Testis (tissue), 5 donors: ENCODE measurements at regions of chr2 and their contacts with region 1.

Region 1: GRCh38 chr2:134118279-134119116 is 135.4 kb upstream of the MGAT5 start:
- DNase-seq: peak; percentile 95
- H3K4me3 ChIP-seq: no peak overlapping the region
- H3K27ac ChIP-seq: peak overlapping the region in 1 of 2 donors; percentile 92
- H3K4me1 ChIP-seq: peaks cover 10% of the 10 kb centered on the region
- H3K27me3 ChIP-seq: no peaks in the 10 kb centered on the region
- CTCF ChIP-seq: peak; percentile 62 to 87 (median 84)
- POLR2A ChIP-seq: no peak

Region 2: GRCh38 chr2:133886735-133887660 is 231.5 kb before region 1 on chr2:
- intact Hi-C with region 1: loop called (anchors 10 kb)
- DNase-seq: peak; percentile 91
- H3K4me3 ChIP-seq: no peak overlapping the region
- H3K27ac ChIP-seq: no peak overlapping the region
- H3K4me1 ChIP-seq: no peaks in the 10 kb centered on the region
- H3K27me3 ChIP-seq: no peaks in the 10 kb centered on the region
- CTCF ChIP-seq: peak; percentile 62 to 72 (median 69)
- POLR2A ChIP-seq: no peak

Region 3: DNA sequence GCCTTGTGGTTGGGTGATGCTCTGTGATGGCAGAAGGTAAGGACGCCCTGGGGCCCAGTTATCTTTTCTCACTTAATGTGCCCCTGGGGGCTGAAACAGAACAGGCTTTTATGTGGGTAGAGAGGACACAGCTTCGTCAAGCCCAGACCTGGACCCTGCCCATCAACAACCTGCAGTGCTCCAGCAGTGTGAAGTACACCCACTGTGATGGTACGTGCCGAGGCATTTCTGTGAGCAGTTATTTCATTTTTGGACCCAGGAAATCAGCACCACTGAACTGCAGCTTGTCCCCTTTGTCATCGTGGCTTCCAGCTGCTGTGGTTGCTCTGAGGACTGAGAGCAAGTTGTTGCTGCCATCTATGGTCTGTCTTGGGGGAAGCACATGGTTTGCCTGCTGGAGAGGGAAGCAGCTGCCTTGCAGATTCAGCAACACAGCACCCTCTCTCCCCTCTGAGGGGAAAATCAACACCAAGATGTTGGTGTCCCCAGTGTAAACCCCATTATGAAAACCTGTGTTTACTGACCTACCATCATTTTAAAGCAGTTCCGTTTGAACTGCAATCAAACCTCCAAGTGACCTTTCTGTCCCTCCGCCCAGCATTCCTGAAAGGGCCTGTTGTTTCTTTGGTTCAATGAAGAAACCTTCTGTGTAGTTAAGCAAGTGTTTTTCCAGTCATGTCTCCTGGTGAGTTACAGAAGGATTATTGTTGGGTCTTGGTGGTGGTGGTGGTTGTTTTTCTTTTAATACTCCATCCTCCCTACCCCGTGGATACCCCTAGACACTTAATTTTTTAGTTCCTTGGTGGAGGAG is 293.5 kb after region 1 on chr2:
- intact Hi-C with region 1: loop called (anchors 5 kb)
- DNase-seq: peak; percentile 76
- H3K4me3 ChIP-seq: no peak overlapping the region
- H3K27ac ChIP-seq: no peak overlapping the region
- H3K4me1 ChIP-seq: no peaks in the 10 kb centered on the region
- H3K27me3 ChIP-seq: no peaks in the 10 kb centered on the region
- CTCF ChIP-seq: peak; percentile 20 to 68 (median 54)
- POLR2A ChIP-seq: no peak

Region 4: DNA sequence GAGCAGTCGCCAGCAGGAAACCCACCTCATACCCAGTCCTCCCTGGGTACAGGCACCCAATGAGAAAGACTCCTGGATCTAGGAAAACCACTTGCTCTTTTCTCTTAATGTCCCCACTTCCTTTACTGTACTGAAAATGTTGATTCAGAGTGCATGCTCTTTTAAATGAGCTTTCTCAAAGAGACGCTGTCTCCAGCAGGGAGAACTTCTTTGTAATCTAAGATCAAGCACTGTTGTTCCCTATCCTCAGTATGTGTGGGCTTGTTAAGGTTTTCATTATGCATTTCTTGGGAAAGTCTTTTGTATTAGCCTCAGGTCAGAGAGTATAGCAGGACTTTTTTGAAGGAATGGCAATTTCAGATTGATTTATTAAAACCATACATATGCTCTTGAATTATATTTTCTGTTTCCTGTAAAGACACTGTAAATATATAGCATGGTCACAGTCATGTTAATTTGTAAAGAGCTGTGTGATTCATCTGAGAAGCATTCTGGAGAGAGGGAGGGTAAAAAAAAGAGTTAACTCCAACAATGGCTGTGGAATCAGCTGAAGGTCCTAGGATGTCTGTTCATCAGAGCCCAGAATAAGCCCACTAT is 313.4 kb after region 1 on chr2:
- intact Hi-C with region 1: loop called (anchors 10 kb)
- DNase-seq: no peak
- H3K4me3 ChIP-seq: no peak overlapping the region
- H3K27ac ChIP-seq: no peak overlapping the region
- H3K4me1 ChIP-seq: no peaks in the 10 kb centered on the region
- H3K27me3 ChIP-seq: no peaks in the 10 kb centered on the region
- CTCF ChIP-seq: no peak
- POLR2A ChIP-seq: no peak